Endothelial cell of umbilical vein (primary cell): ENCODE measurements at regions of chr2 and their contacts with region 1.

Region 1: GRCh38 chr2:68925295-68925896 is 27.3 kb downstream of the GKN2 start:
- DNase-seq: peak; percentile 58
- H3K4me3 ChIP-seq: no peak overlapping the region
- H3K27ac ChIP-seq: no peak overlapping the region
- H3K4me1 ChIP-seq: no peaks in the 10 kb centered on the region
- H3K27me3 ChIP-seq: peaks cover 2 to 9% of the 10 kb centered on the region in 2 experiments
- CTCF ChIP-seq: peak; percentile 83 to 87
- POLR2A ChIP-seq: no peak

Region 2: GRCh38 chr2:68715353-68716041 is 209.9 kb before region 1 on chr2:
- CTCF ChIA-PET with region 1: interaction called, 517 read pairs
- POLR2A ChIA-PET with region 1: no interaction called
- dilution Hi-C with region 1: no loop called
- intact Hi-C with region 1: no loop called
- DNase-seq: peak; percentile 54
- H3K4me3 ChIP-seq: no peak overlapping the region
- H3K27ac ChIP-seq: no peak overlapping the region
- H3K4me1 ChIP-seq: no peaks in the 10 kb centered on the region
- H3K27me3 ChIP-seq: peaks cover 16 to 27% of the 10 kb centered on the region in 2 experiments
- CTCF ChIP-seq: peak; percentile 73 to 83
- POLR2A ChIP-seq: no peak

Region 3: DNA sequence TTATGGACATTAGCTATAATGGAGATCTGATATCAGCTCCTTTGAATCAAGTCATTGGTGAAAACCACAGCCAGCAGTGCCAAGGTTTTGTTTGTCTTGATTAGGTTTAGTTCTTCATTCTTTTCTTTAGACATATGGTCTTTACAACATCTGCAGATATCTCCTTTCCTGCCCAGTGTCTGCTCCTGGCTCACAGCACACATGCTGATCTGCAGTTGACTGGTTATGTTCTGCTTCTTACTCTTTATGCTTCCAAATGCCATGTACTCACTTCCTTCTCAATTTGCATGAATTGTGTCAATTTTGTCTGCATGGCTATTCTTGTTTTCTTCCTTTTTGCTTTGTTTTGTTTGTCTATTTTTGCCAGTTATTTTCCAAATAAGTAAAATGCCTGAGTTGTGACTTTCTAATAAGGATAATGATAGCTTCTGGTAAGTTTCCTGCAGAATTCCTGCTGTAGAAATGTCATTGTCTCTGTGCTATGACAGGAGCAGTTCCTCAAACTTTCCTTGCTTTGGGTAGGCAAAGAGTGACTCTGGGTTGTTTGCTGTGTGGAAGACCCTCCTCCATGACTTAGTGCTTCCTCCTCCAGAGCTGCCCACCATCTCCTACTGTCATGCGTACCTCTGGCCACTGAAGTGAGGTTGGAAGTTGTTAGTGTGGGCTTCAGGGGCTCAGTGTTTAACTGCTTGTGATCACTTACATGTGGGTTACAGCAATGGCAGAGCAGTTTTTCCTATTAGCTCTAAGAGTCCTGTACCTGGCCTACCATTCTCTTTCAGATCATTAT is 182.6 kb before region 1 on chr2:
- CTCF ChIA-PET with region 1: interaction called, 69 read pairs
- POLR2A ChIA-PET with region 1: no interaction called
- dilution Hi-C with region 1: loop called (anchors 25 kb)
- intact Hi-C with region 1: no loop called
- DNase-seq: no peak
- H3K4me3 ChIP-seq: no peak overlapping the region
- H3K27ac ChIP-seq: no peak overlapping the region
- H3K4me1 ChIP-seq: peaks cover 6% of the 10 kb centered on the region
- H3K27me3 ChIP-seq: peaks cover 2 to 3% of the 10 kb centered on the region in 2 experiments
- CTCF ChIP-seq: no peak
- POLR2A ChIP-seq: no peak

Region 4: GRCh38 chr2:68849579-68850030 is 75.8 kb before region 1 on chr2:
- CTCF ChIA-PET with region 1: interaction called, 12 read pairs
- POLR2A ChIA-PET with region 1: no interaction called
- dilution Hi-C with region 1: no loop called
- intact Hi-C with region 1: no loop called
- DNase-seq: peak; percentile 84
- H3K4me3 ChIP-seq: no peak overlapping the region
- H3K27ac ChIP-seq: peak overlapping the region; percentile 88
- H3K4me1 ChIP-seq: peaks cover 24% of the 10 kb centered on the region
- H3K27me3 ChIP-seq: no peaks in the 10 kb centered on the region
- CTCF ChIP-seq: no peak
- POLR2A ChIP-seq: peak; percentile 45

Region 5: DNA sequence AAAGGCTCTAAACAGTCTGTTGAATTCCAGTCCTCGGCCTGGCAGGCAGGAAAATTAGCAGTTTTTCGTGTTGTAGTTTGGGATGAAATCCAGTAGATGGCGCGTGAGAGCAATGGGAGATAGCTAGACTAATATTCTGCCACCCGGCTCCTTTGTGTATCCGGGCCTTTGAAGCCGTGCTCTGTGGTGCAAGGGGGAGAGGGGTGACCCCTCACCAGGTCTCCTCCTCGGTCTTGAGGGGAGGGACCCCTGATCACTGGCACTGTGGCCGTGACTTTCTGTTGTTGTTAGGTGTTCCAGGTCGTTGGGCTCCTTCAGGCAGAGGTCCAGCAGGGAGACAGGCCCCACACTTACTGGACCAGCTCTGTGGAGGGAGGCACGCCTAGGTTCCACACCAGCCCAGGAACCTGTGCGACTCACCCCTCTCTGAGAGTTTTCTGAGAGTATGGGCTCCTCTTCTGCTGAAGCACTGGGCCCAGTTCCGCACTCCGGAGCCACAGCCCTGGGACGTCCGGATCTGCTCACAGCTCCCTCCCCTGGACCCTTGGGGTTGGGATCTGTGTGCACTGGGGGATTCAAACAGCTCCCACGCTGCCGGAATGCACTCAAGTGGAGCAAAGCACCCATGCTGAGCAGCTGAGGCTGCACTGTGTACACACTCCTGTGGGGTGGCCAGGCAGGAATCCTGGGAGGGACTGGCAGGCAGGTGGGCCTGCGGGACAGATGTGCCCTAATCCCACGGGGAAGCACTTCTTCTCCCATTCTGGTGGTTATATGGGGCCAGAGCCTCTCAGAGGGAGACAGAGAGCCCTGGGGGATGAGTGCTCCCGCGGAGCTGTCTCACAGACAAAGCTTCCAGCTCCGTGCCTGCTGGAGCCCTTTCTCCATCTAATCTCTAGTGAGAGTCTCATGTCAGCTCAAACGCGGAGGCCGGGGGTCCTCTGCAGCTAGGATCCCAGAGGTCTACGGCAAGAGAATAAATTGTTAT is 18.5 kb after region 1 on chr2:
- CTCF ChIA-PET with region 1: interaction called, 29 read pairs
- POLR2A ChIA-PET with region 1: no interaction called
- dilution Hi-C with region 1: no loop called
- intact Hi-C with region 1: no loop called
- DNase-seq: peak; percentile 64
- H3K4me3 ChIP-seq: no peak overlapping the region
- H3K27ac ChIP-seq: no peak overlapping the region
- H3K4me1 ChIP-seq: no peaks in the 10 kb centered on the region
- H3K27me3 ChIP-seq: peaks cover 6 to 29% of the 10 kb centered on the region in 2 experiments
- CTCF ChIP-seq: peak; percentile 70 to 71
- POLR2A ChIP-seq: no peak